ENCODE measurements at regions of chr6 and their contacts with region 1.

Region 1: GRCh38 chr6:107443608-107444267 is 15.6 kb downstream of the PDSS2 start:
- DNase-seq: no peak
- H3K4me3 ChIP-seq: no peak overlapping the region
- H3K27ac ChIP-seq: no peak overlapping the region
- H3K4me1 ChIP-seq: no peaks in the 10 kb centered on the region
- H3K27me3 ChIP-seq: no peaks in the 10 kb centered on the region
- CTCF ChIP-seq: no peak
- POLR2A ChIP-seq: no peak

Region 2: DNA sequence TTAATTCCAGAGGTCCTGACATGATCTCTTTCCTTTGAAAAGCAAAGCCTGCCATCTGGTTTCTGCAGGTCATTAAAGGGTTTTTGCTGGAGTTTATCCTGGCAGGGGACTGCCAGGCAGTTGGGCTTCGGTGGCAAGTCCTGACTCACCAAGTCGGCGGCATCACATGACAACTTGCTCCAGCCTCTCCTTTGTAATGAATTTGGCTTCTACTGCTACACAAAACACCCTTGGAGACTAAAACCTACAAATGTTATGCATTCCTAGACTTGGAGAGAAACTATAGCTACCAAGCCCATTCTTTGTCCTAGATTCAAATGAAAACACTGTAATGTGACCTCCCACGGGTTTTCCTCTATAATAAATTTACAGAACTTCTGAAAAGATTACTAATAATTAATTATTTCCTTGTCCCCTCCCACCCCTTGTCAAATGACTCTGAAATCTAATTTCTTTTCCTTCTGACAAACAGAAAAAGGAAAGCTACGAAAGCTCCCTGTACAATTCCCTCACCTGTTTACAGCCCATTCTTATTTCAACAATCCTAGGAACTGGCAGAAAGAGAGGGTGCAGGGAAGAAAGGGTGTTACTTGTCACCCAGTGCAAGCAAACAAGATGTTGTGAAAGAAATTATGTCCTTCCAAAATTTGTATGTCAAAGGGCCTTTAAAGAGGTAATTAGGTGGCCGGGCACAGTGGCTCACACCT is 751.5 kb before region 1 on chr6:
- intact Hi-C with region 1: no loop called
- DNase-seq: peak; percentile 70
- H3K4me3 ChIP-seq: no peak overlapping the region
- H3K27ac ChIP-seq: peak overlapping the region; percentile 85 to 86
- H3K4me1 ChIP-seq: peaks cover 0 to 5% of the 10 kb centered on the region in 2 donors
- H3K27me3 ChIP-seq: no peaks in the 10 kb centered on the region
- CTCF ChIP-seq: no peak
- POLR2A ChIP-seq: no peak

Region 3: GRCh38 chr6:107645800-107646575 is 202.2 kb after region 1 on chr6:
- intact Hi-C with region 1: loop called (anchors 10 kb)
- DNase-seq: no peak
- H3K4me3 ChIP-seq: no peak overlapping the region
- H3K27ac ChIP-seq: no peak overlapping the region
- H3K4me1 ChIP-seq: no peaks in the 10 kb centered on the region
- H3K27me3 ChIP-seq: no peaks in the 10 kb centered on the region
- CTCF ChIP-seq: no peak
- POLR2A ChIP-seq: no peak

Region 4: DNA sequence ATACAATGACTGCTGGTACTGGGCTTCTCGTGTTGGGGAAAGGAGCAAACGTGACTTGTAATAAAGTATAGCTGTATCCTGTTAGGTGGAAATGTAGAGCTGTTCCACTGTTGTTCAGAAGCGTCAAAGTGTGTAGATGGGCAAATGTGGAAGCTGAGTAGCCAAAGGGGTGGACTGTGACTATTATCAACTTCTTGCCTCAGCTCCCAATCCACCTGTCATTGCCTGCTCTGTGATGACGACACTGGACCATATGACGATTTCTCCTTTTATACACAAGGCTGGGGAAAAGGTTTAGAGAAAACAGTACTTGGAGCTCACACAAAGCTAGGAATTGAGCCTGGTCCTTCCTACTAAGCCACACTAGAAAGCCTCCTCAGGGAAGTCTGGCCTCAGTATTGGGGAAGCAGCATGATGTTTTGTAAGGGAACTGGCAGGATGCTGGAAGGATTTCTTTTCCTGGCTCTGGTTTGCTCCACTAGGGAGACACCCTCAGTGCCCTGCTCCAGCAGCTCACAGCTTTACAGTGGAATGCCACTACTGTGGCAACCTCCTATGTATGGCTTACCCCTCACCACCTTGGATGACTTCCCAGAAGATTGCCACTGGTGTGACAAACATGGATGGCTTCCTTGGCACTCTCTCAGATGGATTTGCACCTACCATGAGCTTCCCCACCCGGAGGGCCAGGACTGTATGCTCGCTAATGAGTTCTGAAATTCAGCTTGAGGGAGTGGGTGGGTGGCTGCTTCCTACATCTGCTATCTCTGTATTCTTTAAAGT is 1918.6 kb after region 1 on chr6:
- intact Hi-C with region 1: loop called (anchors 10 kb)
- DNase-seq: no peak
- H3K4me3 ChIP-seq: no peak overlapping the region
- H3K27ac ChIP-seq: no peak overlapping the region
- H3K4me1 ChIP-seq: no peaks in the 10 kb centered on the region
- H3K27me3 ChIP-seq: no peaks in the 10 kb centered on the region
- CTCF ChIP-seq: no peak
- POLR2A ChIP-seq: no peak